Activated naive CD4-positive, alpha-beta T cell treated with anti-CD3 and anti-CD28 coated beads, Interleukin-2, amount 10 ng/mL, durations not matched to agents 7 days and 5 days (primary cell): ENCODE measurements at regions of chrX and their contacts with region 1.

Region 1: DNA sequence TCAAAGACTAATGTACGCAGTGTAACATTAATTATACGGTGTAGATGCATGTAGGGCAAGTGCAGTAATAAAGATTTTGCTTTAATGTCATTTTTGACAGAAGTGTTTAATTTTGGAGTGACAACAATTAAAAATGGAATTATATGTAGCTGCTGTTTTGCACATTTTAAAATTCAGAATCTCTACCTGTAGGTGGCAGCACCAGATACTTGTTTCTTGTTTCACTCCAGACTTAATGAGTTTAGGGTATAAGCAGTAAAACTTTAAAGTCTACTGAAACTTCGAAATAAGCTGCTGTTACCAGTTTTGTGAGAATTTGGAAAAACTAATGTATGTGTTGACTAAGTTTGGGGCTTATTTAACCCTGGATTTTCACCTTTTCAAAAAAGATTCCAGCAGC is 144.9 kb downstream of the POLA1 start:
- DNase-seq: no peak
- H3K4me3 Mint-ChIP-seq: no peak overlapping the region
- H3K27ac Mint-ChIP-seq: no peak overlapping the region
- H3K4me1 Mint-ChIP-seq: no peaks in the 10 kb centered on the region
- H3K27me3 Mint-ChIP-seq: no peaks in the 10 kb centered on the region

Region 2: DNA sequence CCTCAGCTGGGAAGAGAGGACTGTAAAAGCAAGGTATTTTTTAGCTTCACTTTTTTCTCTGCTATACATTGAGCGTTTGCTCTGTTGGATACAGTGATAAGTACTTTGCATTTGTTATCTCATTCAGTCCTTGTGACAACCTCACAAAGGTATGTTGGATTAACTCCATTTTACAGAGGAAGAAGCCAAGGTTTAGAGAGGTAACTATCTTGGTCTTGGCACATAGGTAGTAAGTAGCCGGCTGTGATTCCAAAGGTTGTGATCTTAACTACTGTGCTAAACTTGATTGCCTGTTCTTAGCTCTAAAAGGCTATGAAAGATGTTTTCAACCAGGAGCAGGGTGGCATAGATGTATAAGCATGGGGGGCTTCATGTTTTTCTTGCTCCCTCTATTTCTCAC is 10.5 kb before region 1 on chrX:
- CTCF ChIA-PET with region 1: interaction called, 10 read pairs
- DNase-seq: no peak
- H3K4me3 Mint-ChIP-seq: no peak overlapping the region
- H3K27ac Mint-ChIP-seq: no peak overlapping the region
- H3K4me1 Mint-ChIP-seq: no peaks in the 10 kb centered on the region
- H3K27me3 Mint-ChIP-seq: no peaks in the 10 kb centered on the region

Region 3: GRCh38 chrX:25020905-25021449 is 182.3 kb after region 1 on chrX:
- CTCF ChIA-PET with region 1: interaction called, 10 read pairs
- DNase-seq: peak; percentile 37
- H3K4me3 Mint-ChIP-seq: peak overlapping the region; percentile 21
- H3K27ac Mint-ChIP-seq: peak overlapping the region; percentile 49
- H3K4me1 Mint-ChIP-seq: peaks cover 19% of the 10 kb centered on the region
- H3K27me3 Mint-ChIP-seq: peaks cover 89% of the 10 kb centered on the region

Region 4: DNA sequence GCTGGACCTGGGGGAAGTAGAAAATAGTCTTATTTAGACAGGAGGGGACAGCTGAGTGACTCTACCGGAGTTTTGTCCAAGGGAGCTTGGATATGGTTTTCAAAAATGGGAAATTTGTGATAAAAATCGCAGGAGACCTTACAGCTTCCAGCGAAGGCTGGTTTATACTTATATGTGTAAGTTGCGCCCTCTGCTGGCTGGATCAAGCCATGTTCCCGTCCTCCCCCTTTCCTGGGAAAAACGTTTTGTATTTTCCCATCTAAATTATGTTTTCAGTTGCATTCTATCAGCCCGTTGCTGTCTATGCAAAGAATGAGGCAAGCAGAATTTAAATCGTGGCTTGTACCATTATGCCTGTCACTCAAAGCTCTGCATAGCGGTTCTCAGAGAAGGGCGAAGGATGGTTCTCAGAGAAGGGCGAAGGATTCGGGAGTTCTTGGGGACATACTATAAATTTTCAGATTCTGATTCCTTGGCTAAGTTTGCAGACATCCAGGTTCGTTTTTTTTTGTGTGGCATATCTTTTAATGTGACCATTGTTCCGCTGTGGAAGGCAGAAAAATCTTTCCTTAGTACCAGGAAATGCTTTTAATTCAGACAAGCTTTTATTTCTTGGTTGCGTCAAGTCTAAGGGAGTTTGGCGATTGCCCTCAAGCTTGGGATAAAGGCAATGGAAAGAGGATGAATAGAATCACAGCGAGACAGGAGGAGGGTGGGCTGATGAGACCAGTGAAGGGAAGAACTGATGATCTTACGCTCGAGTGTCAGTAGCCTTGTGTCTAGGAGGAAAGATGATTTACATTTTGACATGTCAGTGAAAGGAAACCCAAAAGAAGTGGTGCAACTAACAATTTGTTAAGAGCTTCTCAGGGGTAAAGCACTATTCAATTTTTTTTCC is 305.7 kb after region 1 on chrX:
- CTCF ChIA-PET with region 1: interaction called, 21 read pairs
- DNase-seq: peak; percentile 47
- H3K4me3 Mint-ChIP-seq: no peak overlapping the region
- H3K27ac Mint-ChIP-seq: no peak overlapping the region
- H3K4me1 Mint-ChIP-seq: no peaks in the 10 kb centered on the region
- H3K27me3 Mint-ChIP-seq: peaks cover 3% of the 10 kb centered on the region